Activated naive CD4-positive, alpha-beta T cell treated with anti-CD3 and anti-CD28 coated beads, Interleukin-2, amount 10 ng/mL, durations not matched to agents 7 days and 5 days (primary cell): ENCODE measurements at regions of chr5 and their contacts with region 1.

Region 1: GRCh38 chr5:134411546-134412266 is at the start of gene CDKN2AIPNL:
- DNase-seq: peak; percentile 93
- H3K4me3 Mint-ChIP-seq: peak within 1 kb of the TSS; percentile 95
- H3K27ac Mint-ChIP-seq: peak within 1 kb of the TSS; percentile 82
- H3K4me1 Mint-ChIP-seq: peaks cover 34% of the 10 kb centered on the region
- H3K27me3 Mint-ChIP-seq: peaks cover 3% of the 10 kb centered on the region

Region 2: DNA sequence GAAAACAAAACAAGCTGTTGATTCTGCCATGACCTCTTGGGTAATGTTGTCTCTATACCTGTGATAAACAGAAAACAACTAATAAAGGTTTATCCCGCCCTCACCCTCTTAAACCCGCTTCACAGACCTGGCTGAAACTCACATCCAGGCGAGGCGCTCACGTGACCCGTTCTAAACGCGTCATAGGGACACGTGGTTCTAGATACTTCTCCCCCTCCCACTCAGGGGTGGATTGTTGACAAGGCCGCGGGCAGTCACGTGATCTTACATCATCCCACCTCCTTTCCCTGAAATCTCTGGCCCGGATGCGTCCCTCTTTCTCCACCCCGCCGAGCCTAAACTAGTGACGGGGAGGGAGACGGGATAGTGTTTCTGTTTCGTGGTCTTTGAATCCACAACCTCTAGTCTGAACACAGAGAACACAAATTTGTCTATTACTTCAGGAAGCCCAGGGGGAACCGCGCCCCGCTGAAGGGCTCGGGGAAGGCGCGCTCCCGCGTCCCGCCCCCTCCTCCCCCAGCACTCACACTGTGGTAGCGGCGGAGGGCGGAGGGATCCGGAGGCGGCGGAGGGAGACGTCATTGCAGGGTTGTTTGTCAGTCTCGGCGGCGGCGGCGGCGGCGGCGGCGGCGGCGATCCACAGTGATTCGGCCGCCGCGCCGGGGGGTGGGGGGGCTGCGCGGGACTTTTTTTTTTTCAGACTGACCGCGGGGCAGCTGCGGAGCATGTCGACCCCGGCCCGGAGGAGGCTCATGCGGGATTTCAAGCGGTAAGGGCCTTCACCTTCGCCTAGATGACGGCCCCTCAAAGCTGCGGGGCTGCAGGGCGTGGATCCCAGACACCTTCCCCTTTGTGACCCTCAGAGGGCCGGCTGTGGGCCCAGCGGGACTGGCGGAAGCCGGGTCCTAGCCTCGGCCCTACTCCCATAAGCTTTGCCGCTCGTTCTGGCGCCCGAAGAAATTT is 40.6 kb before region 1 on chr5 and contains the start of gene UBE2B:
- CTCF ChIA-PET with region 1: interaction called, 11 read pairs
- DNase-seq: peak; percentile 99
- H3K4me3 Mint-ChIP-seq: peak within 1 kb of the TSS; percentile 99
- H3K27ac Mint-ChIP-seq: peak within 1 kb of the TSS; percentile 99
- H3K4me1 Mint-ChIP-seq: peaks cover 49% of the 10 kb centered on the region
- H3K27me3 Mint-ChIP-seq: peaks cover 17% of the 10 kb centered on the region

Region 3: GRCh38 chr5:134577796-134578363 is 166.2 kb after region 1 on chr5:
- CTCF ChIA-PET with region 1: interaction called, 14 read pairs
- DNase-seq: peak; percentile 84
- H3K4me3 Mint-ChIP-seq: no peak overlapping the region
- H3K27ac Mint-ChIP-seq: no peak overlapping the region
- H3K4me1 Mint-ChIP-seq: no peaks in the 10 kb centered on the region
- H3K27me3 Mint-ChIP-seq: no peaks in the 10 kb centered on the region

Region 4: GRCh38 chr5:134626369-134627014 is 214.8 kb after region 1 on chr5:
- CTCF ChIA-PET with region 1: no interaction called
- DNase-seq: no peak
- H3K4me3 Mint-ChIP-seq: no peak overlapping the region
- H3K27ac Mint-ChIP-seq: no peak overlapping the region
- H3K4me1 Mint-ChIP-seq: peaks cover 20% of the 10 kb centered on the region
- H3K27me3 Mint-ChIP-seq: no peaks in the 10 kb centered on the region